ENCODE measurements at regions of chr12 and their contacts with region 1.

Region 1: GRCh38 chr12:62259993-62260732 is at the start of gene USP15:
- DNase-seq: peak; percentile 97
- ATAC-seq: peak; percentile 85 to 95 (median 88)
- H3K4me3 ChIP-seq: peak within 1 kb of the TSS; percentile 84
- H3K4me3 Mint-ChIP-seq: peak within 1 kb of the TSS; percentile 100
- H3K27ac ChIP-seq: peak within 1 kb of the TSS; percentile 93
- H3K27ac Mint-ChIP-seq: peak within 1 kb of the TSS; percentile 99 to 100
- H3K4me1 ChIP-seq: peaks cover 14% of the 10 kb centered on the region
- H3K4me1 Mint-ChIP-seq: peaks cover 51 to 52% of the 10 kb centered on the region in 2 donors
- H3K27me3 ChIP-seq: no peaks in the 10 kb centered on the region
- H3K27me3 Mint-ChIP-seq: no peaks in the 10 kb centered on the region
- CTCF ChIP-seq: peak; percentile 63
- total RNA-seq, gene USP15: 188 to 251 (median 197) TPM

Region 2: GRCh38 chr12:62021811-62022210 is 238.4 kb before region 1 on chr12:
- intact Hi-C with region 1: no loop called
- DNase-seq: no peak
- ATAC-seq: no peak
- H3K4me3 ChIP-seq: no peak overlapping the region
- H3K4me3 Mint-ChIP-seq: no peak overlapping the region
- H3K27ac ChIP-seq: no peak overlapping the region
- H3K27ac Mint-ChIP-seq: no peak overlapping the region
- H3K4me1 ChIP-seq: no peaks in the 10 kb centered on the region
- H3K4me1 Mint-ChIP-seq: no peaks in the 10 kb centered on the region
- H3K27me3 ChIP-seq: no peaks in the 10 kb centered on the region
- H3K27me3 Mint-ChIP-seq: no peaks in the 10 kb centered on the region
- CTCF ChIP-seq: no peak

Region 3: GRCh38 chr12:62603061-62603810 is 343.1 kb after region 1 on chr12:
- intact Hi-C with region 1: loop called (anchors 1 kb)
- DNase-seq: peak; percentile 78 to 92
- ATAC-seq: peak; percentile 60 to 81 (median 64)
- H3K4me3 ChIP-seq: peak overlapping the region; percentile 61
- H3K4me3 Mint-ChIP-seq: peak overlapping the region; percentile 91
- H3K27ac ChIP-seq: peak overlapping the region; percentile 98
- H3K27ac Mint-ChIP-seq: peak overlapping the region; percentile 99 to 100
- H3K4me1 ChIP-seq: peaks cover 3% of the 10 kb centered on the region
- H3K4me1 Mint-ChIP-seq: peaks cover 34 to 38% of the 10 kb centered on the region in 2 donors
- H3K27me3 ChIP-seq: no peaks in the 10 kb centered on the region
- H3K27me3 Mint-ChIP-seq: no peaks in the 10 kb centered on the region
- CTCF ChIP-seq: no peak